Activated naive CD4-positive, alpha-beta T cell treated with anti-CD3 and anti-CD28 coated beads for 36 hours (primary cell): ENCODE measurements at regions of chr1 and their contacts with region 1.

Region 1: DNA sequence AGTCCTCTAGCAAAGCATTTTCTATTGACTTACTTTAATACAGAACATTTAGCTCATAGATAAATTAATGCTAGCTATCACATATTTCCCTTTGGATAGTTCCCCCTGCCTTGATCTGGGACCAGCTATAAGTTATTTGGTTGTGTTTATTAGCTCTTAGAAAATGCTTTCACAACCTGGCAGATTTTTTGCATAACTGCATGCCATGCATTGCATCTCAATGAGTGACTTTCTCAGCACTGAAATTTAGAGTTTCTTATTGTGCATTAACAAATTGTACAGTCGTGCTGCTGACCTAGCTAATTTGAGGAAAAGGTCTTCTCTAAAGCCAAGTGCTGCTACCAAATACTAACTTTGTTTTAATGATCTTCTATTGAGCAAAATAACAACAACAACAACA is 164.8 kb downstream of the PLPPR5 start:
- DNase-seq: no peak
- H3K4me3 Mint-ChIP-seq: no peak overlapping the region
- H3K27ac Mint-ChIP-seq: no peak overlapping the region
- H3K4me1 Mint-ChIP-seq: peaks cover 23% of the 10 kb centered on the region
- H3K27me3 Mint-ChIP-seq: no peaks in the 10 kb centered on the region

Region 2: DNA sequence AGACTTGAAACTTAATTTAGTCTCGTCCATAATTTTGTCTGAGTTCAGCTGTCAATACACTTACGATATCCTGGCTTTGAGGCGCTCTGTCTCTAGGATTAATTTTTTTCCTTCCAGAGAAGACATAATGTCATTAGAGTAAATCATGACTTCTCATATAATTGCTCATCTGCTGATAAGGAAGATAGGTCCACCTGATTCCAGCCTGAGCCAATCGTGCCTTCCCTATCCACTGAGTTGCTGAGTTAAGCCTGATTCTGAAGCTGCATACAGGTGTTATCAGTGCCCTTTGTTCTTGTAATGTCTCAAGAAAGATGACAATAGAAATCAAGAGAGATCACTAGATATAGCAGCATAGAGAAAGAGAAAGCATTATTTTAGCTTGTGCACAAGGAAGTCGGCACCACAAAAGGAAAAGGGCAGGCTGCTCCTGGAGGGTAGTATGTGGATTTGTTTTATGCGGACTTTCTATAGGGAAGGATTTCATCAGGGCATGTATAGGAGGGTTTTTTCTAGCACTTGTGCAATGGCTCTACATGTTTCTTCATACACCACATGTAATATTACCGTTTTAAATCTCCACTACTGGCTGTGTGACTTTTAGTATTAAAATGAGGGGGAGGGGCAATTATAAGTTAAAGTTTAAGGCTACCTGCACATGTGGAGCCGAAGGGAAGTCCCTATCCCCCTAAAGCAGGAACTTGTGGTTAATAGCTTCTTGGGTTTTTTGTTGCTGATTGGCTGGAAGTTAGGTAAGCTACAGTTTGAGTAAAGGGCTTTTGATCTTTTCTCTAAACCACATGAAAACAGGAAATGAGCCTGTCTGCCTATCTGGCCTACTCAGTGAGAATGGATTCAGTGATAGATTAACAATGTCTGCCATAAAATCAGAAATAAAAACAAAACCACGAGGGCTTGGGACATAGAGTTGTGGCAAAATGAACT is 31.4 kb after region 1 on chr1:
- CTCF ChIA-PET with region 1: no interaction called
- intact Hi-C with region 1: loop called (anchors 1 kb)
- DNase-seq: peak; percentile 60
- H3K4me3 Mint-ChIP-seq: peak overlapping the region; percentile 68
- H3K27ac Mint-ChIP-seq: peak overlapping the region; percentile 97
- H3K4me1 Mint-ChIP-seq: peaks cover 23% of the 10 kb centered on the region
- H3K27me3 Mint-ChIP-seq: no peaks in the 10 kb centered on the region